ENCODE measurements at regions of chr17 and their contacts with region 1.

Region 1: GRCh38 chr17:69523244-69523861 is 108.9 kb downstream of the MAP2K6 start:
- DNase-seq: peak; percentile 28
- ATAC-seq: peak; percentile 76
- H3K4me3 ChIP-seq: no peak overlapping the region
- H3K27ac ChIP-seq: no peak overlapping the region
- H3K4me1 ChIP-seq: no peaks in the 10 kb centered on the region
- H3K27me3 ChIP-seq: no peaks in the 10 kb centered on the region
- CTCF ChIP-seq: peak; percentile 52 to 77 (median 73); a peak in 5 of 6 replicates
- POLR2A ChIP-seq: no peak
- RAD21 ChIP-seq: peak; percentile 69

Region 2: DNA sequence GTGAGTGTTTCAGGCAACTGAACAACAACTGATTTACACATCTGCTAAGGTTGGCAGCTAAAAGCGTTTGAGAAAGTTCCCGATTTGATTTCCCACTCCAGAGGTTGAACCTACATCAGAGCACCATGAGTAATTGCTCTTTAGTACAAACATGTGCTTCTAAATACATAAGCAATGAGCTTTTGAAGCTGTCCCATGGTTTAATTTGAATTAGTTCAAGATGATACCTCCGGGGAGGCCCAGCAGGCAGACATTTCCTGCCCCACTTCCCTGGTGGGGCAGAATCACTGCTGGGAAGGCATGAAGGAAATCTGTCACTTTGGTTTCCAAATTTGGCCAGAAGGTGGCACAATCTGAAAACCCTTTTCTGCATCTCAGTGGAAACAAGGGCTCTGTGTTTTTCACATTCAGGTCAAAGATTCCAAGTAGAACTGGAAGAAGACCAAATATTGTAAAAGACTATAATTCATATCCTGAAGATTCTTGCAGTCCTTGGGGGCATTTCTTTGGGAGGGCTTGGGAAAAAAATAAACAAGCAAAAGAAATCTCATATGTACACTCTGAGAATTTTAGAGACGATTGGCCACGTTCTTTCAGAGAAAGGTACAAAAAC is 746.0 kb before region 1 on chr17:
- CTCF ChIA-PET with region 1: interaction called, 19 read pairs
- POLR2A ChIA-PET with region 1: no interaction called
- RAD21 ChIA-PET with region 1: no interaction called
- intact Hi-C with region 1: loop called (anchors 2 kb)
- DNase-seq: peak; percentile 51
- ATAC-seq: peak; percentile 46
- H3K4me3 ChIP-seq: no peak overlapping the region
- H3K27ac ChIP-seq: no peak overlapping the region
- H3K4me1 ChIP-seq: peaks cover 4 to 9% of the 10 kb centered on the region in 2 experiments; a peak in 3 of 4 replicates
- H3K27me3 ChIP-seq: no peaks in the 10 kb centered on the region
- CTCF ChIP-seq: peak; percentile 77 to 95 (median 87)
- POLR2A ChIP-seq: no peak
- RAD21 ChIP-seq: peak; percentile 94

Region 3: DNA sequence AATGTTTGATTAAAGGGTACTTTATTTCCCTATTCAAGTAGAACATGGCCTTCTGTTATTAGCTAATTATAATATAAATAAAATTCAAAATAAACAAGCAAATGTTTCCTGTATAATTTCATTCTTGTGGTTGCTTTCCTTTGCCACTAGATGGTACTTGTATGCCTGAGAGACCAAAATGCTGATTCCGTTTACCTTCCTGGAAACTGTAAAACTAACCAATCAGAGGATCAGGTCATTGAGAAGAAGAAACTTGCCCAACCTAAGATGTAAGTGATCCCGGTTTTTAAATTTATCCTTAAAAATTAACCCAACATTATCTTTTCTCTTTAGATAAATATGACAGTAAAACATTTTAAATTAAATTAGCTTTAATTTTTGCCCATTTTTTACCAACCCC is 188.3 kb before region 1 on chr17:
- CTCF ChIA-PET with region 1: interaction called, 54 read pairs
- POLR2A ChIA-PET with region 1: no interaction called
- RAD21 ChIA-PET with region 1: no interaction called
- intact Hi-C with region 1: loop called (anchors 1 kb)
- DNase-seq: peak; percentile 69
- ATAC-seq: peak; percentile 78
- H3K4me3 ChIP-seq: no peak overlapping the region
- H3K27ac ChIP-seq: no peak overlapping the region
- H3K4me1 ChIP-seq: no peaks in the 10 kb centered on the region
- H3K27me3 ChIP-seq: no peaks in the 10 kb centered on the region
- CTCF ChIP-seq: peak; percentile 46 to 68 (median 53)
- POLR2A ChIP-seq: no peak
- RAD21 ChIP-seq: peak; percentile 68

Region 4: DNA sequence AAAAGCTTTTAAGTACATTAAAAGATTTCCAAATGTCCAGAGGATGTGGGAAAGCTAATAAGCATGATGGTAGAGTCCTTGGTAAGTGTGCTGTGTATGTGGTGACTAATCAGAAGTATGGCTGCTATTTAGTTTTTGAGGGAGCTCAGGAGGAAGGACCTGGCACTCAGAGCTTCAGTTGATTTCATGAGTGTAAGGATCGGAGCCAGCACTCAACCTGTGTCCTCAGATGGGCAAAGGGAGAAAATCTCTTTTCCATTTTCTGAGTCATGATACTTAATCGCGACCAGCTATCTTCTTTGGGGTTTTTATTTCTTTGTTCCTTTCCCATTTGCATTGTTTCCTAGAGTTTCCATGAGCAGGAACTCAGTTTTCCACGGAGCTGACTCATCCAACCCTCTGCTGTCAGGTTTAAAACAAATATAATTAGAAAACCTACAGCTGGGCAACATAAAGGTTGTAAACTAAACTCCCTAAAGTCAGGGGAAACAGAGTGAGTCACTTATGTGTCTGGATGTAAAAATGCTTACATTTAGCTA is 16.5 kb after region 1 on chr17:
- CTCF ChIA-PET with region 1: interaction called, 10 read pairs
- POLR2A ChIA-PET with region 1: no interaction called
- RAD21 ChIA-PET with region 1: no interaction called
- intact Hi-C with region 1: no loop called
- DNase-seq: no peak
- ATAC-seq: no peak
- H3K4me3 ChIP-seq: no peak overlapping the region
- H3K27ac ChIP-seq: no peak overlapping the region
- H3K4me1 ChIP-seq: no peaks in the 10 kb centered on the region
- H3K27me3 ChIP-seq: no peaks in the 10 kb centered on the region
- CTCF ChIP-seq: no peak
- POLR2A ChIP-seq: no peak
- RAD21 ChIP-seq: no peak

Region 5: DNA sequence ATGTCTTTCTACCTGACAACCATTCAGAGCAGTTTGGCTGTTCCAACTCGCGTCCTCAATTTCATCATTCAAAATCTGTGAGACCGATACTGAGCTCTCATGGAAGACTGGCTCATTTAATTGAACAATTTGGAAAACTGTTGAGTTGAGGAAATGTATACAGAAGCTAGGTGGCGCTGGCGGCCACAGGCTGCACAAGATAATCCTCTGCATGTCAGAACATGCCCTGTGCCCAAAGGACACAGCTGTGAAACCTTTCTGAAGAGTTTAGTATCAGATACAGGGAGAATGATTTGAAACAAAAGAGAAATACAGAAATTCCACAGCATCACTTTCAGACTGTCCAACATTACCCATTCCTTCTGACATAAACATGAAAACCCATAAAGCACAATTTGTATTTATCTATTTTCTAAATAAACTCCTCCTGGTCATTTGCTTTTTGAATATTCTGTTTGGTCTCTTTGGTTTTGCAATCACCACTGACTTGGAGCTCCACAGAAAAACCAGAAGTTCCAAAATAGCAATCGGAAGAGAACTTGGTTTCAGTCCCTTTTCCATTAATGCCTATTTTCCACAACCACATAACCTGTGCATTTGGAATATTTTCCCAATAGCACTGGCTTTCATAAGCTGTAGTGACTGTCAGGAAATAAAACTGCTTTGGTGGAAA is 83.9 kb after region 1 on chr17:
- CTCF ChIA-PET with region 1: interaction called, 16 read pairs
- POLR2A ChIA-PET with region 1: no interaction called
- RAD21 ChIA-PET with region 1: no interaction called
- intact Hi-C with region 1: no loop called
- DNase-seq: peak; percentile 57
- ATAC-seq: peak; percentile 87
- H3K4me3 ChIP-seq: no peak overlapping the region
- H3K27ac ChIP-seq: peak overlapping the region; percentile 47; the same call in 1 of the 2 replicates
- H3K4me1 ChIP-seq: peaks cover 8 to 10% of the 10 kb centered on the region in 2 experiments; a peak in 3 of 4 replicates
- H3K27me3 ChIP-seq: no peaks in the 10 kb centered on the region
- CTCF ChIP-seq: peak; percentile 66 to 98 (median 92)
- POLR2A ChIP-seq: no peak
- RAD21 ChIP-seq: peak; percentile 74

Region 6: DNA sequence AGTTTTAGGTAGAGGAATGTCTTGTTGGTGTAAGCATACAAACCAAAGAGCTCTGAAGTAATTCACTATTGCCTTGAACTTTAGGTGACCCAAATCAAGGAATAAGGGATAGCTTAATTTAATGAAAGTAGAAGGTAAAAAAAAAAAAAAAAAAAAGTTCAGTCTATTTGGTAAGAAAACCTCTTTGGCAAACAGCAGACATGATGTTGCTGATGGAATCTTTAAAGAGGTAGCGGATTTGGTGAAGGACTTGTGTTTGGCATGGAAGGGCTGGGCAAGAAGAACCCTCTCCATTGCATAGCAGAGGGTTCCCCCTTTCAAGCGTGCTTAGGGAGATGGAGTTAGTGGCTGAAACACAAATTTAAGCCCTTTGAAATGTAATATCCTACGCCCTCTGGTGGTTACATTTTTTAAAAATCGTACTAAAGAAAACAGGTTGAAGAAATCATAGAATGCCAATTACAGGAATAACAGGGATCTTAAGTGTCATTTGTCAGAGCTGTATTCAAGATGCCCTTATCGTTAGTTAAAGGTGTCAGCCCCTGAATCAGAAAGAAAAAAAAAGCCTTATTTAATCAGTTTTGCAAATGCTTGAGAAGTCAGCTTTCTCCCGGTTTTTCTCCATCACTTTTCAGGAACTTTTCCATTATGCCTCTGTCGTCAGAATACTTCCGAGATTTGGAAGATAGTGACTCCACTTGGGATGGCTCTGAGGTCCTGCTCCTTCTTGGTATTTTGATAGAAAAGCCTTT is 1029.1 kb after region 1 on chr17:
- CTCF ChIA-PET with region 1: interaction called, 8 read pairs
- POLR2A ChIA-PET with region 1: no interaction called
- RAD21 ChIA-PET with region 1: no interaction called
- intact Hi-C with region 1: loop called (anchors 5 kb)
- DNase-seq: peak; percentile 29
- ATAC-seq: peak; percentile 77
- H3K4me3 ChIP-seq: no peak overlapping the region
- H3K27ac ChIP-seq: no peak overlapping the region
- H3K4me1 ChIP-seq: no peaks in the 10 kb centered on the region
- H3K27me3 ChIP-seq: no peaks in the 10 kb centered on the region
- CTCF ChIP-seq: peak; percentile 24 to 76 (median 39); a peak in 3 of 6 replicates
- POLR2A ChIP-seq: no peak
- RAD21 ChIP-seq: peak; percentile 58

Region 7: DNA sequence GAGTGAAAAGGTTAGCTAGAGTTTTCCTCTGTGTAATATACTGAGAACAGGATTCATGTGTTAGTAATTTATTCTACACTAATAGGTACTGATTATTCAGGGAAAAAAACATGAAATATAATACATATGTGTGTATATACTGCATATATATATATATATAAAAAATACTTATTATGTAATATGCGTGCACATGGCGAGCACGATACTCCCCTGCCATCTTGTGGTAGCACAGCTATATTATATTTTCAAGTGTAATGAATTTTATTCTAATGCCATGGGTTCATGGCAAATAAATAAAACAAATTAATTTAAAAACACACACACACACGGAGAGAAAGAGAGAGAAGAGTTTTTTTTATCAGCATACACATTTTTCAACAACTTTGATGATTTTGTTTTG is 1106.5 kb after region 1 on chr17:
- CTCF ChIA-PET with region 1: interaction called, 14 read pairs
- POLR2A ChIA-PET with region 1: no interaction called
- RAD21 ChIA-PET with region 1: no interaction called
- intact Hi-C with region 1: no loop called
- DNase-seq: no peak
- ATAC-seq: no peak
- H3K4me3 ChIP-seq: no peak overlapping the region
- H3K27ac ChIP-seq: no peak overlapping the region
- H3K4me1 ChIP-seq: no peaks in the 10 kb centered on the region
- H3K27me3 ChIP-seq: no peaks in the 10 kb centered on the region
- CTCF ChIP-seq: no peak; a peak in 1 of 6 replicates
- POLR2A ChIP-seq: no peak
- RAD21 ChIP-seq: peak; percentile 45

Measured in HCT116 (cell line).